Activated B cell treated with CpG ODN at 0.5 μM for 24 hours (primary cell): ENCODE measurements at regions of chr11 and their contacts with region 1.

Region 1: GRCh38 chr11:47213985-47214564 is 699 bp upstream of the DDB2 start:
- DNase-seq: peak; percentile 72
- ATAC-seq: peak; percentile 73
- H3K4me3 Mint-ChIP-seq: peak overlapping the region; percentile 99
- H3K27ac Mint-ChIP-seq: peak overlapping the region; percentile 100
- H3K4me1 Mint-ChIP-seq: peaks cover 35% of the 10 kb centered on the region
- H3K27me3 Mint-ChIP-seq: no peaks in the 10 kb centered on the region
- CTCF ChIP-seq: no peak

Region 2: GRCh38 chr11:47186076-47186936 is 27.8 kb before region 1 on chr11 and contains the start of gene PACSIN3:
- CTCF ChIA-PET with region 1: interaction called, 5 read pairs
- POLR2A ChIA-PET with region 1: interaction called, 27 read pairs
- intact Hi-C with region 1: loop called (anchors 1 kb)
- DNase-seq: peak; percentile 55
- ATAC-seq: peak; percentile 78
- H3K4me3 Mint-ChIP-seq: peak within 1 kb of the TSS; percentile 80
- H3K27ac Mint-ChIP-seq: no peak within 1 kb of the TSS
- H3K4me1 Mint-ChIP-seq: peaks cover 9% of the 10 kb centered on the region
- H3K27me3 Mint-ChIP-seq: peaks cover 14% of the 10 kb centered on the region
- CTCF ChIP-seq: no peak
- total RNA-seq, gene PACSIN3: 1.5 TPM in 2 replicates

Region 3: DNA sequence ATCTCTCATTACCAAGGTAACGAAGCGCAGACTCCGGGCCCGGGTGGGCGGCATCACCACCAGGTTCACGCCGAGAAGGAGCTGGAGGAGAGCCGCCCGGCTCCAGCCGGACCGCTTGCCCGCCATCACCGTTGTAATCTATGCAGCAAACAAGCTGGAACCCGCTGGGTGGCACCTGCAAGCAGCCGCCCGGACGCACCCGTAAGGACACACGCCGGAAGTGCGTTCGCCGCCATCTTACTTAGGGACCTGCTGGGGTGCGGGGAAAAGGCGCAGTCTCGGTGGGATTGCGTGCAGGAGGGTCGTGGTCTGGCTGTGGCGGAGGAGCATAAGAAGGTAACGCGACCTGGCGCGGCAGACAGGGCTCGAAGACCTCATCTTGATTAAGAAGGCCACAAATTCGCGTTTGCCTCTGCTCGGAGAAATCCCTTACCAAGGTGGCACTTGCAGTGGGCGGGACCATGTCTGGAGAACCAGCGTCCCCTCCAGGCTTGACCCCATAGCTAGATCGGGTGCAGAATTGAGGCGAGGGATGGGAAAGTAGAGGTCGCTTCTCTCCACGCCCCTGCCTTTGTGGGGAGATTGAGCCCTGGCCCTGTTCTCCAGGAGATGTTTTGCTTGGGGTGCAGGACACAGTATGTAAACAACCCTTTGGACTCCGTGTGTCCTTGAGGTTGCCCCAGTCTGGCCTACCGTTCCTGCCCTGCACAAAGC is 34.7 kb after region 1 on chr11 and contains the start of gene ACP2:
- CTCF ChIA-PET with region 1: interaction called, 5 read pairs
- POLR2A ChIA-PET with region 1: interaction called, 77 read pairs
- intact Hi-C with region 1: loop called (anchors 1 kb)
- DNase-seq: peak; percentile 82
- ATAC-seq: peak; percentile 96
- H3K4me3 Mint-ChIP-seq: peak within 1 kb of the TSS; percentile 98
- H3K27ac Mint-ChIP-seq: peak within 1 kb of the TSS; percentile 98
- H3K4me1 Mint-ChIP-seq: peaks cover 21% of the 10 kb centered on the region
- H3K27me3 Mint-ChIP-seq: no peaks in the 10 kb centered on the region
- CTCF ChIP-seq: no peak
- total RNA-seq, gene ACP2: 18.7 and 22.5 TPM in 2 replicates

Region 4: DNA sequence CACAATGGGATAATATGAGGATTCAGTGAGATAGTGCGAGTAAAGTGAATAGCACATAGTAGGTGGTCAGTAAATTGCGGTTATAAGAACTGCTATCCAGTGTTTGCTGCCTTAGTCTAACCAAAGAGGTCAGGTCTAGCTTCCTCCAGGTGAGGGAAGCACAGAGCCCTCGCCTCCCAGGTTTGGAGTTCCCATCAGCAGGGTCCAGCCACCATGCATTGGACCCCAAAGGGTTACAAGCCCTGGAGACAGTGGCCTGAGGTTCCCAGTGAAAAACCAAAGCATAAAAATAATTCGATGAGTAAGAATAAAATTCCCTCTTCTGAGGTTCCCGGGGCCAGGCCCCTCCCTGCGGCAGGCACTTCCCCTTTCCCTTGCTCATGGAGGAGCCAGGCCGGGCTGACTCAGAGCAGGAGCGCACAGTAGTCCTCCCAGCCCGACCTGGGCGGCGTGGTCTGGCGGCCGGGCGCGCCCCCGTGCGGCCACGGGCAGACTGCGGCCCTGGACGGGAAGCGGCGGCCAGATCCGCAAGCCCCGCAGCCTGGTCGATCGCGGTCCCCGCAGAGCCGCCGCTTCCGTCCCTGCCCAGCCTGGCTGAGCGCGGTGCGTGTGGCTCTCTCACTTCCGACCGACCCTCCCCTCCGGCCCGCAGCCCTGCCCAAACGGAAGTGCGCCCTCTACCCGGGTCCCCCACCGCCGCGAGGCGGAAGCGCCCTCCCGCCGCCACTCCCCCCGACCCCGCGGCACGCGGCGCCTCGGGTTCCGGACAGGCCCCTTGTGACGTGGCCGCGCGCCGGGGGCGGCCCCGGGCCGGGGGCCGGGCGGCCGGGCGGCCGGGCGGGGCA is 193.9 kb after region 1 on chr11 and contains the start of gene SLC39A13:
- CTCF ChIA-PET with region 1: no interaction called
- POLR2A ChIA-PET with region 1: interaction called, 14 read pairs
- intact Hi-C with region 1: loop called (anchors 1 kb)
- DNase-seq: peak; percentile 98
- ATAC-seq: peak; percentile 85
- H3K4me3 Mint-ChIP-seq: peak within 1 kb of the TSS; percentile 90
- H3K27ac Mint-ChIP-seq: peak within 1 kb of the TSS; percentile 95
- H3K4me1 Mint-ChIP-seq: peaks cover 24% of the 10 kb centered on the region
- H3K27me3 Mint-ChIP-seq: no peaks in the 10 kb centered on the region
- CTCF ChIP-seq: no peak
- total RNA-seq, gene SLC39A13: 27.5 and 28.2 TPM in 2 replicates